ENCODE measurements at regions of chr16 and their contacts with region 1.

Region 1: DNA sequence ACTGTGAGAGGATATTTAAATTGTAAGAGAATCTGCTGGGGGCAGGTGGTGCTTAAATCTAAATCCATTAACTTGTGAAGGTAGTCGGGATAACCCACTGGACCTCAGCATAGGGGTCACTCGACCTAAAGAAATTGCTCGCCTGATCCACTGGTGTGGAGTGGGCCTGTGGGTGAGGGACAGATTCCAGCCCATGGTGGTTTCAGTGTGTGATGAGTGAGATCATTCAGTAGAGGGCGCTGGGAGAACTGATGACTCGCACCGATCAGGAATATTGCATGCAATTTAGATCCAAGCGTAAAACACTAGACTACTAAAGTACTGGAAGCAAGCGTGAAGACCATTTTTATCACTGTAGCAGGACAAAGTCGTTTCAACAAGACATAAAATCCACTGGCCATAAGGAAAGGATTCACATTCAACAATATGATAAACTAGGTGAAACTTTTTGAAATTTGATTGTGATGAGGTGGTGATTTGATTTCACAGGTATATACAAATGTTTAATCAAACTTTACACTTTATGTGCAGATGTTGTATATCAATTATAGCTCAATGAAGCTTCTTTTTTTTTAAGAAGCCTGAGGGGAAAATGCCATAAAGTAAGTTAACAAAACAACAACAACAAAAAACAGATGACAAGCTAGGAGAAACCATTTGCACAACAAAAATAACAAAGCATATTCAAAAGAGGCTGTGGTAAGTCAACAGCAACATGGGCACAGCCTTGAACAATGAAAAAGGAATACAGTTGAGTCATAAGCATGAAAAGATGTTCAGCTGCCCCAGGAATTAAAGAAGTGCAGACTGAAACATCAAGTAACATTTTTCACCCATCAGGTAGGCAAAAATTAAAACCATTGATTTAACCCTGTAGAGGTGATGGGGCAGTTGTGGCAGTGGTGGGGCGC is 7.5 kb upstream of the TMEM170A start:
- DNase-seq: peak; percentile 68
- H3K4me3 ChIP-seq: no peak overlapping the region
- H3K27ac ChIP-seq: no peak overlapping the region
- H3K4me1 ChIP-seq: no peaks in the 10 kb centered on the region
- H3K27me3 ChIP-seq: no peaks in the 10 kb centered on the region
- CTCF ChIP-seq: peak; percentile 72

Region 2: GRCh38 chr16:75342308-75342829 is 129.6 kb before region 1 on chr16:
- intact Hi-C with region 1: no loop called
- DNase-seq: peak; percentile 26
- H3K4me3 ChIP-seq: no peak overlapping the region
- H3K27ac ChIP-seq: peak overlapping the region; percentile 42
- H3K4me1 ChIP-seq: no peaks in the 10 kb centered on the region
- H3K27me3 ChIP-seq: no peaks in the 10 kb centered on the region
- CTCF ChIP-seq: no peak

Region 3: DNA sequence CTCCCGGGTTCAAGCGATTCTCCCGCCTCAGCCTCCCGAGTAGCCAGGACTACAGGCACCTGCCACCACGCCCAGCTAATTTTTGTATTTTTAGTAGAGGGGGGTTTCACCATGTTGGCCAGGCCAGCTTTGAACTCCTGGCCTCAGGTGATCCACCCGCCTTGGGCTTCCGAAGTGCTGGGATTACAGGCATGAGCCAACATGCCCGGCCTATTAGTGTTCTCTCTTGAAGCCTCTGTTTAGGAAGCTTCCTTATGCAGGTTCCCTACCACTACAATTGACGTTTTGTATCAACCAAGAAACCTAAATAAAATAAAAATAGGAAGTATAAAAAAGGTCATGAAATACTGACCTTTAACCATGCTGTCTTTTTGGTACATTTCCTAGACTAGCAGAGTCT is 47.9 kb after region 1 on chr16:
- intact Hi-C with region 1: loop called (anchors 5 kb)
- DNase-seq: no peak
- H3K4me3 ChIP-seq: no peak overlapping the region
- H3K27ac ChIP-seq: no peak overlapping the region
- H3K4me1 ChIP-seq: peaks cover 3% of the 10 kb centered on the region
- H3K27me3 ChIP-seq: no peaks in the 10 kb centered on the region
- CTCF ChIP-seq: no peak

Region 4: GRCh38 chr16:75622761-75623605 is 151.0 kb after region 1 on chr16 and contains the start of gene ADAT1:
- intact Hi-C with region 1: loop called (anchors 10 kb)
- DNase-seq: peak; percentile 99
- H3K4me3 ChIP-seq: peak within 1 kb of the TSS; percentile 93
- H3K27ac ChIP-seq: peak within 1 kb of the TSS; percentile 97
- H3K4me1 ChIP-seq: peaks cover 16% of the 10 kb centered on the region
- H3K27me3 ChIP-seq: no peaks in the 10 kb centered on the region
- CTCF ChIP-seq: no peak
- total RNA-seq, gene ADAT1: 33.0 to 38.8 TPM

Region 5: DNA sequence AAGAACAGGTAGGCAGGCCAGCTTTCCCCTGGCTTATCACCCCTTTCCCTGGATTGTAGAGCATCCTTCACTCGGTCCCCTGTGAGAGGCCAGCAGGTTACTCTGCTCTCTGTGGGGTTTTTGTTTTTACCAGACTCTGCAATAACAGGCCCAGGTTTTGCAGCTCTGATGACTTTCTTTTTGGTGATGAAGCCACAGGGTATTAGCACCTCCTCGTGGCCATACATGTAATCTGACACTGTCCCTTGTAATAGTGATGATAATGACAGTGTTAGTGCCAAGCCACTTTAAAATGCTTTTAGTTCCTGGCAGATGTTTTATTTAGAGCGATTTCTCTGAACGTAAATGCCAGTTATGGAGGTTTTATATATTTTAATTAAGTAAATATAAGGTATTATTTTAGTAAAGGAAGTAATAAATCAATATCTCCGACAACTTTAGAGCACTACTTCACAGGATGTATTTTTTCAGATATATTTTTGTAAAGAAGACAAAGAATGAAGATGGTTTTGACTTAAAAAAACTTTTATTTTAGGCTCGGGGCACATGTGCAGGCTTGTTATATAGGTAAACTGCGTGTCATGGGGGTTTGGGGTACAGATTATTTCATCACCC is 292.3 kb after region 1 on chr16:
- intact Hi-C with region 1: loop called (anchors 5 kb)
- DNase-seq: peak; percentile 60
- H3K4me3 ChIP-seq: no peak overlapping the region
- H3K27ac ChIP-seq: no peak overlapping the region
- H3K4me1 ChIP-seq: no peaks in the 10 kb centered on the region
- H3K27me3 ChIP-seq: no peaks in the 10 kb centered on the region
- CTCF ChIP-seq: peak; percentile 73

Measured in colonic mucosa (tissue), 4 donors.